CD8-positive, alpha-beta T cell (primary cell): ENCODE measurements at regions of chr1 and their contacts with region 1.

Region 1: GRCh38 chr1:172532700-172533509 is at the start of gene SUCO:
- DNase-seq: peak; percentile 99 to 100 (median 100)
- ATAC-seq: peak; percentile 80
- H3K4me3 ChIP-seq: peak within 1 kb of the TSS; percentile 74 to 80
- H3K4me3 Mint-ChIP-seq: peak within 1 kb of the TSS; percentile 99
- H3K27ac ChIP-seq: peak within 1 kb of the TSS; percentile 93 to 94
- H3K27ac Mint-ChIP-seq: peak within 1 kb of the TSS; percentile 100
- H3K4me1 ChIP-seq: peaks cover 34% of the 10 kb centered on the region
- H3K4me1 Mint-ChIP-seq: peaks cover 47% of the 10 kb centered on the region
- H3K27me3 ChIP-seq: no peaks in the 10 kb centered on the region
- H3K27me3 Mint-ChIP-seq: no peaks in the 10 kb centered on the region
- CTCF ChIP-seq: peak; percentile 16
- total RNA-seq, gene SUCO: 106 to 107 TPM

Region 2: DNA sequence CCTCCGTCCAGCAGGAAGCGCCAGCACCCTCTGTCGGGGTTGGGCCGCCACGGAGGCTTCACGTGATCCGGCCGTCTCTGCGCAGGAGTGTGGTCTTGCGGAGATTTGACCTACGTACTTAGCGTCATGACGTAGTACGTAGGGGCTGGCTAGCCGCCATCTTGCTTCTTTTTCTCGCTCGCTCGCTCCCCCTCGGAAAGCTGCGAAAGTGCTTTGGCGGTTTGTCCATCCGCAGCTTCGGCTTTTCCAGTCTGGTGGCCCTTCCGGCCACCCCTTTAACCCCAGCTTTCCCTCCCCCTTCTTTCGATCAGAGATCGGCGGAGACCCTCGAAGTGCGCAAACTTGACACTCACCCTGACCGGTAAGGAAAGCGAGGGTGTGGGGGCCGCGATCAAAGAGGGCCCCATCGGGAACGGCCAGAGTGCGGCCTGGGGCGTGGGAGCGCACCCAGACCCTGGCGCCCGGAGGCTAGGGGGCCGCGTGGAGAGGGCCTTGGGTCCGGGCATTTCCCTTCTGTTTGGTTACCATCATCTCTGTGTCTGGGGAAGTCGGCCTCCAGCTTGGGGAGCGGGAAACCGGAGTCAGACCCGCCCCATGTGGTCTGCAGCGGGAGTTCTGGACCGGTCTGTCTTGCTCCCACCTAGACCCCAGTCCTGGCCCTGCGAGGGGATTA is 1047.4 kb before region 1 on chr1 and contains the start of gene PRRC2C:
- CTCF ChIA-PET with region 1: no interaction called
- POLR2A ChIA-PET with region 1: no interaction called
- intact Hi-C with region 1: loop called in 1 of 2 experiments (anchors 5 kb)
- DNase-seq: peak; percentile 87 to 99 (median 94)
- ATAC-seq: peak; percentile 79
- H3K4me3 ChIP-seq: peak within 1 kb of the TSS; percentile 93 to 97
- H3K4me3 Mint-ChIP-seq: peak within 1 kb of the TSS; percentile 90
- H3K27ac ChIP-seq: peak within 1 kb of the TSS; percentile 96 to 100
- H3K27ac Mint-ChIP-seq: peak within 1 kb of the TSS; percentile 95
- H3K4me1 ChIP-seq: peaks cover 44% of the 10 kb centered on the region
- H3K4me1 Mint-ChIP-seq: peaks cover 48% of the 10 kb centered on the region
- H3K27me3 ChIP-seq: no peaks in the 10 kb centered on the region
- H3K27me3 Mint-ChIP-seq: no peaks in the 10 kb centered on the region
- CTCF ChIP-seq: peak; percentile 89
- total RNA-seq, gene PRRC2C: 416 to 423 TPM

Region 3: DNA sequence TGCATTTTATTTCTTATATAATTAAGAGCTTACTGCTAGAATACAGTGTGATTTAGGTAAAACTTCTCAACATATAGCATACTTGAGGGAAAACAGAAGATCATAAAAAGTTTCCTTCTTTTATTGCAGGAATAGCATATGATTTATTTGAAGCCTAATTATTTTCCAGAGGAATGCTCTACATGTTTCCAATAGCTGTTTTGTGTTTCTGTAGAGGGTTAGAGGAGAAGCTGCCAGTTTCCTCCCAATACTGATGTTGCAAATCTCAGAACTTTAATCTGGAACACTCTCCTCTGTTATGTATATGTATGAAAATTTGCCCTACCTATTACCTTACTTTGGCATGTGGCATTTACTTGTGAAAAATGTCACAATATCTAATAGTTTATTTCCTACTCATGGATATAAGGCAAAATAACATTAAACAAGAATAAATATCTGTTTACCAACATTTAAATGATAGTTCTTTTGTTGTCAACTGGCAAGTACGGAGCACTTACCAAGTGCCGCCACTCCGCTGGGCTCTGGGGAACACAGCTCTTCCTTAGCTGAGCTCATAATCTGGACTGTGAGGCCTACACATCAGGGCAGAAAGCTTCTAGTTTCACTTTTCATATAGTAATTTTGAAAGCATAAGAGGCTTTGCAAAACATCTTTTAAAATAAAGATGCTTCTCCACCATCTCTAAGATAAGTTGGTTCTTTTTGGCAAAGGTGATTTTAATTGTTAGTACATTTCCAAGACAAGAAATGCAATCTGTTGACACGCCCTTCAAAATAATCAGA is 352.2 kb before region 1 on chr1:
- CTCF ChIA-PET with region 1: no interaction called
- POLR2A ChIA-PET with region 1: no interaction called
- intact Hi-C with region 1: loop called in 1 of 2 experiments (anchors 2 kb)
- DNase-seq: peak in 7 of 9 experiments; percentile 13 to 73 (median 44)
- ATAC-seq: peak; percentile 66
- H3K4me3 ChIP-seq: peak overlapping the region; percentile 17 to 37
- H3K4me3 Mint-ChIP-seq: peak overlapping the region; percentile 76
- H3K27ac ChIP-seq: peak overlapping the region; percentile 46 to 87
- H3K27ac Mint-ChIP-seq: peak overlapping the region; percentile 96
- H3K4me1 ChIP-seq: peaks cover 24% of the 10 kb centered on the region
- H3K4me1 Mint-ChIP-seq: peaks cover 37% of the 10 kb centered on the region
- H3K27me3 ChIP-seq: no peaks in the 10 kb centered on the region
- H3K27me3 Mint-ChIP-seq: no peaks in the 10 kb centered on the region
- CTCF ChIP-seq: no peak

Region 4: DNA sequence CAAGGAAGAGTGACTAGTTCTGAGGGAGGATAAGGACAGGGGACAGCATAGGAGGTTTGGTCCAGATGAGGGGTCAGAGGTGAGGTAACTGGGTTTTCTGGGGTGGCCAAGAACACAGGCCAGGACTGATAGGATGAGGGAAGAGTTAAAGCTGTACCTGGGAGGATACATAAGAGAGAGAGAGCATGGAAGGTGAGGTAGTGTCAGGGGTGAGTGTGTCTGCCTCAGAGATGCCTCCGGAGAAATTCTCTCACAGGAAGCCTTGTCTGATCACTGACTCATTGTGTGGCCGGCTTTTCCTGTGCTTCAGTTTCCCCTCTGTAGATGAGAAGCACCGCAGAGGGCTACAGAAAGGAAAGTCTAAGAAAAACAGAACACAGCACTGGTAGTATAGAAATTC is 166.2 kb after region 1 on chr1:
- CTCF ChIA-PET with region 1: no interaction called
- POLR2A ChIA-PET with region 1: no interaction called
- intact Hi-C with region 1: loop called in 1 of 2 experiments (anchors 2 kb)
- DNase-seq: peak; percentile 43 to 92 (median 77)
- ATAC-seq: peak; percentile 76
- H3K4me3 ChIP-seq: peak overlapping the region in 1 of 2 experiments; percentile 0
- H3K4me3 Mint-ChIP-seq: peak overlapping the region; percentile 64
- H3K27ac ChIP-seq: peak overlapping the region; percentile 6 to 84
- H3K27ac Mint-ChIP-seq: peak overlapping the region; percentile 91
- H3K4me1 ChIP-seq: peaks cover 76% of the 10 kb centered on the region
- H3K4me1 Mint-ChIP-seq: peaks cover 49% of the 10 kb centered on the region
- H3K27me3 ChIP-seq: no peaks in the 10 kb centered on the region
- H3K27me3 Mint-ChIP-seq: no peaks in the 10 kb centered on the region
- CTCF ChIP-seq: no peak

Region 5: DNA sequence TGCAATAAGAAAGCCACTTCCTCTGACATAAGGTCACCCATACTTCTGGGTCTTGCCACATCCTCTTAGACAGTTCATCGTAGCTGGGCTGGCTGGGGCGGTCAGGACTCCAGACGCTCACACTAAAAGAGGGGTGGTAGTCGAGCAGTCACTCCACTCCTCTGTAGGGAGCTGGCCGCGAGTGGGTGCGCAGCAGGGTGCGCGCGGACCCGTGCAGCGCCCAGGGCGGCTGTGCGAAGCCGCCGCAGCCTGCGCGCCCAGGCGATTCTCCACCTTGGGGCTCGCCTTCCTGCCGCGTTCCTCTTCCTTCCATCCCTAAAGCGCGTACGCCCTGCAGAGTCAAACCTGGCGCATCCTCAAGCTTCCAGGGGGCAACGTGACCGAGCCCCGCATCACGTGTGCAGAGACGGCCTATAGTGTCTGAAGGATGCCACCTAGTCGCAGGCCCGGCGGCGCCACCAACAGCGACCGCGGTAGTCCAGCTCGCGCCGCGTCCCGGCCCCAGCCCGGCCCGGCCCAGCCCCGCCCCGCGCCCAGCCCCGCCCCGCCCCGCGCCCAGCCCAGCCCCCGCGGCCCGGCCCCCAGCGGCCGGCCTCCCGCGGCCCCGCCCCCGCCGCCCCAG is 943.9 kb after region 1 on chr1:
- CTCF ChIA-PET with region 1: no interaction called
- POLR2A ChIA-PET with region 1: no interaction called
- intact Hi-C with region 1: loop called in 1 of 2 experiments (anchors 2 kb)
- DNase-seq: peak; percentile 51 to 91 (median 73)
- ATAC-seq: peak; percentile 76
- H3K4me3 ChIP-seq: peak overlapping the region; percentile 71 to 83
- H3K4me3 Mint-ChIP-seq: peak overlapping the region; percentile 93
- H3K27ac ChIP-seq: peak overlapping the region; percentile 70 to 91
- H3K27ac Mint-ChIP-seq: peak overlapping the region; percentile 95
- H3K4me1 ChIP-seq: peaks cover 54% of the 10 kb centered on the region
- H3K4me1 Mint-ChIP-seq: peaks cover 75% of the 10 kb centered on the region
- H3K27me3 ChIP-seq: no peaks in the 10 kb centered on the region
- H3K27me3 Mint-ChIP-seq: no peaks in the 10 kb centered on the region
- CTCF ChIP-seq: no peak

Region 6: DNA sequence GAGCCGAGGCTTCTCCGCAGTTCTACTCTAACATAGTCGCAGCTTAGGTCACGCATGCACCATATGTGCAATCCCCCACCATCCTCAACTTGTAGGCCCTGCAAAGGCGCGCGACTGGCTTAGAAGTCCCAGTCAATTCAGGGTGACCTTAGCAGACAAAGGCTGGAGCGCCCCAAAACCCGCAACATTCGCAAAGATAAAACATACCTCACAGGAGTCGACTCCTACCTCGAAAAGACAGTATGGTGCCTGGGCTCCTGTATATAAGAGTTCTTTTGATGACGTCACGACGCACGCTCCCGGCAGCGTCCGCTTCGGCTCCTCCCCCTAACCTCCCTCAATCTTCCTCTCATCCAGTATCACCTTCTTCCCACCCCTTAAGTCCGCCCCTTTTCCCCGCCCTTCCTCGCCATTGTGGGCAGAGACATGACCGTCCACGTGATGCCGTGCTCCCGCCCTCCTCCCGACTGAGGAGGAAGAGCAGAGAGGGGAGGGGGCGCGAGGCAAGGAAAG is 1334.9 kb after region 1 on chr1 and contains the start of gene GAS5:
- CTCF ChIA-PET with region 1: no interaction called
- POLR2A ChIA-PET with region 1: no interaction called
- intact Hi-C with region 1: loop called (anchors 1 to 2 kb)
- DNase-seq: peak; percentile 97 to 99 (median 98)
- ATAC-seq: peak; percentile 78
- H3K4me3 ChIP-seq: peak within 1 kb of the TSS; percentile 74 to 93
- H3K4me3 Mint-ChIP-seq: peak within 1 kb of the TSS; percentile 95
- H3K27ac ChIP-seq: peak within 1 kb of the TSS; percentile 75 to 93
- H3K27ac Mint-ChIP-seq: peak within 1 kb of the TSS; percentile 96
- H3K4me1 ChIP-seq: peaks cover 61% of the 10 kb centered on the region
- H3K4me1 Mint-ChIP-seq: peaks cover 70% of the 10 kb centered on the region
- H3K27me3 ChIP-seq: no peaks in the 10 kb centered on the region
- H3K27me3 Mint-ChIP-seq: no peaks in the 10 kb centered on the region
- CTCF ChIP-seq: no peak
- total RNA-seq, gene GAS5: 774 to 800 TPM